Mammary epithelial cell (primary cell): ENCODE measurements at regions of chr22 and their contacts with region 1.

Region 1: DNA sequence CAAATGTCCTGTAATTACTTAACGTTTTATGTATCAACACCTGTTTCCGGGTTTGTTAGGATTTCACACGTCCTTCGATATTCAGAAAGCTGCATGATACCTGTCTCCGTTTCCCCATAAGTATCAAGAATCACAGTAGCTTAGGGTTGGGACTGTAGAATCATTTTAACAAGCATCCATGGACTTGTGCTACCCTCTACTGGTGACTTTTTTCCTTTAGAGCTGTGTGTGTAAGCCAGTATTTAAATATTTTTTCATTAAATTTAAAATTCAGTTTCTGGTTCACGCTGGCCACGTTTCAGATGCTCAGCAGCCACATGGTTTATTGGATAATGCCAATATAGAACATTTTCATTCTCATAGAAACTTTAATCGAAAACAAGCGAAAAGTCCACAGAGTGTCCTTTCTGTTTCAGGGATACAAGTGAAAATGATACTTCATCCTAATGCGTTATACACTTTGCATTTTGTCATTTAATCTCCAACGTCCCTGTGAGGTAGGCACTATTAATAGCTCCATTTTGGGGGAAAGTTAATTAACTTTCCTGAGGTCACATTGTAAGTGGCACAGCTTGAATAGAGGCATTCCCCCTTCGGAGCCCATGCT is 61.5 kb upstream of the SLC25A18 start:
- DNase-seq: peak; percentile 53
- H3K4me3 ChIP-seq: no peak overlapping the region
- H3K27ac ChIP-seq: no peak overlapping the region
- H3K4me1 ChIP-seq: no peaks in the 10 kb centered on the region
- H3K27me3 ChIP-seq: peaks cover 2% of the 10 kb centered on the region
- CTCF ChIP-seq: peak; percentile 49 to 67

Region 2: DNA sequence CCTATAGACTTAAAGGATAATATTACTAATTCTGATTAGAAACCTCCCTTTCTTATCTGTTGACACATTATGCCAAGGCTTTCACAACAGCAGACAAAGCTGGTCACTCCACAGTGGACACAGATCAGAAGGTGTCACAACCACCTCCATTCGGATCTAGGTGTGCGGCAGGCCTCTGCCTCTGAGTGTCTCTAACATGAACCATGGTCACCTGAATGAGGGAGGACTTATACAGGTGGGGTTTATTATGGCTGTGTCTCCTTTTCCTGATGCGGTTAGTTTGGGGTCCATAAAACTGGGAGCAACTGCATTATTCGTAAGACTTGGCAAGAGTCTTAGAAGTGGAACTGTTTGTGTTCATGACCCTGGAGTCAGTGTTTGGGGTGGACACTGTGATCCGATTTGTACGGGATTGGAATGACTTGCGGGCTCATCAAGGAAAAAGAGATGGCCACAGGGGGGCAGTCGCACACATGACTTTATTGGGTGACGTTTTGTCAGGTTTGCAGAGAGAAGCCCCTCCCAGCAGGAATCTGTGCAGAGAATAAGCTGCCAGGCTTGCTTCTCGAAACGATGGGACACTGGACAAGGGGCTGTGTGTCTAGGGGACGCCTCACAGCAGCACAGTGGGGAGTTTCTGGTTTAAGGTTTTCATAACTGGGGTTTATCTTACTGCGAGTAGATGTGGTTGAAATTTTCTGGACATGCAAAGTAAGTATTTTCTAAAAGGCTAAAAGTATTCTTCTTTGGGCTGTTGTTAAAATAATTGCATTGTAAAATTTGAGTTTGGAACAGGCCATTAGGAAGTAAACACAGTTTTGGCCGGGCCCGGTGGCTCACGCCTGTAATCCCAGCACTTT is 584.4 kb before region 1 on chr22:
- CTCF ChIA-PET with region 1: no interaction called
- dilution Hi-C with region 1: no loop called
- in situ Hi-C with region 1: loop called in 1 of 2 experiments (anchors 10 kb)
- intact Hi-C with region 1: loop called (anchors 1 kb)
- DNase-seq: peak; percentile 31
- H3K4me3 ChIP-seq: no peak overlapping the region
- H3K27ac ChIP-seq: no peak overlapping the region
- H3K4me1 ChIP-seq: no peaks in the 10 kb centered on the region
- H3K27me3 ChIP-seq: no peaks in the 10 kb centered on the region
- CTCF ChIP-seq: peak; percentile 55 to 70

Region 3: DNA sequence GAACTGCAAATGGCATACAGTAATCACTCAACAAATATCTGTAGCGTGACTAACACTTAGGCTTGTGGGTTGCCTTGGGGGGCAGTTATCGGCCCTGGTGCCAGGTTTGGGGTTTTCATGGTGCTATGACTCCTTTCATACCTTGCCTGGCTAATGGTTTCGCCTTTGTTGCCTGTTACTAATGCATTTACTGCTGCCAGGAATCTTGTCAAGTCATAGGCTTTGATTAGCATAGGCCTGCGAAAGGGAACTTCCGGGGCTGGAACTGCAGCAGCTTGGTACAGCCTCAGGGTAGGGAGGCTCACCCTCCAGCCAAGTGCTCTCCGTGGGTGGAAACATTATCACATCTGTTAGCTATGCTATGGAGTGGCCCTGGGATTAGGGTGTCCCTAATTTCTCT is 74.7 kb after region 1 on chr22:
- CTCF ChIA-PET with region 1: no interaction called
- dilution Hi-C with region 1: no loop called
- in situ Hi-C with region 1: no loop called
- intact Hi-C with region 1: no loop called
- DNase-seq: peak; percentile 99
- H3K4me3 ChIP-seq: no peak overlapping the region
- H3K27ac ChIP-seq: peak overlapping the region; percentile 30
- H3K4me1 ChIP-seq: peaks cover 16% of the 10 kb centered on the region
- H3K27me3 ChIP-seq: no peaks in the 10 kb centered on the region
- CTCF ChIP-seq: no peak